MCF 10A (cell line): ENCODE measurements at regions of chr22 and their contacts with region 1.

Region 1: GRCh38 chr22:23893943-23894709 is at the start of gene MIF:
- DNase-seq: peak; percentile 94
- H3K4me3 Mint-ChIP-seq: peak within 1 kb of the TSS; percentile 89
- H3K27ac Mint-ChIP-seq: peak within 1 kb of the TSS; percentile 99
- H3K4me1 Mint-ChIP-seq: peaks cover 16% of the 10 kb centered on the region
- H3K27me3 Mint-ChIP-seq: no peaks in the 10 kb centered on the region
- CTCF ChIP-seq: peak; percentile 93
- total RNA-seq, gene MIF: 1,031 and 1,126 TPM in 2 replicates

Region 2: DNA sequence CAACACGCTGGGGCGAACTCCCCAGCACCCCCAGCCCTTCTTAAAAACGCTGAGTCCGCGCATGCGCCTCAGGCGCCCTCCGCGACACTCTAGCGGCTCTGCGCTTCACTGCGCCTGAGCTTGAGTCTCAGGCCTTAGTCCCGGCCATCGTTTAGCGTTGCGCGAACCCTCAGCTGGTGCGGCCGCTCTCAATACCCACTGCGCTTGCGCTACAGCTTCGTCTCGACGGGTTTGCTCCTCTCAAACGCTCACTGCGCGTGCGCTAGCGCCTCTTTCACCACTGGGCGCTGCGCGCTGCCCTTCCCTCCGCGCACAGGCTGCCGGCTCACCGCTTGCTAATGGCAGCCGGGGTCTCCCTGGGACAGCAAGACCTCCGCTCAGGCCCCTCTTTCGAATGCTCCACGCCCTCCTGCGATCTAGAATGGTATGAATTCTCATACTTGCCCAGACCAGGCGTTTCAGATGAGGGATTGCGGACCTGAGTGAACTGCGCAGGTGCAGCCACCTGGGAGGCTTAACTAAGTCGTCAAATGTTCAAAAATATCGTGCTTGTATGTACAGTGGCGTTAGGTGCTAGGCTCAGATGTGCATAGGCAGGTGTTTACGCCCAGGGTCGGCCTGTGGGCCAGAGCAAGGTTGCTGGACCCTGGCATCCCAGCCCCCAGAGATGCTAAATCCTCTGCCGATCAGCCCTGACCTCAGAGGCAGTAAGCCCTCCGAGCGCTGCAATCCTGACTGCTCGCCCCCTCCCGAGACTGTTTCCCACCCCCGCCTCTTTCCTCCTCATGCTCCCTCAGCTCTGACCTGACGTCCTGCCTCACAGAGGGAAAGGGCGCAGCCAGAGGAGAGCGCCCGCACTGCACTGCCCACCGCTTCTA is 36.3 kb before region 1 on chr22 and contains the start of gene SLC2A11:
- CTCF ChIA-PET with region 1: interaction called, 9 read pairs
- POLR2A ChIA-PET with region 1: interaction called, 30 read pairs
- intact Hi-C with region 1: no loop called
- DNase-seq: peak; percentile 97
- H3K4me3 Mint-ChIP-seq: peak within 1 kb of the TSS; percentile 77
- H3K27ac Mint-ChIP-seq: peak within 1 kb of the TSS; percentile 57
- H3K4me1 Mint-ChIP-seq: peaks cover 8% of the 10 kb centered on the region
- H3K27me3 Mint-ChIP-seq: no peaks in the 10 kb centered on the region
- CTCF ChIP-seq: peak; percentile 7
- total RNA-seq, gene SLC2A11: 9.6 and 11.3 TPM in 2 replicates

Region 3: GRCh38 chr22:23904573-23905260 is 10.6 kb after region 1 on chr22:
- CTCF ChIA-PET with region 1: interaction called, 16 read pairs
- POLR2A ChIA-PET with region 1: interaction called, 22 read pairs
- intact Hi-C with region 1: no loop called
- DNase-seq: no peak
- H3K4me3 Mint-ChIP-seq: no peak overlapping the region
- H3K27ac Mint-ChIP-seq: no peak overlapping the region
- H3K4me1 Mint-ChIP-seq: no peaks in the 10 kb centered on the region
- H3K27me3 Mint-ChIP-seq: no peaks in the 10 kb centered on the region
- CTCF ChIP-seq: no peak

Region 4: DNA sequence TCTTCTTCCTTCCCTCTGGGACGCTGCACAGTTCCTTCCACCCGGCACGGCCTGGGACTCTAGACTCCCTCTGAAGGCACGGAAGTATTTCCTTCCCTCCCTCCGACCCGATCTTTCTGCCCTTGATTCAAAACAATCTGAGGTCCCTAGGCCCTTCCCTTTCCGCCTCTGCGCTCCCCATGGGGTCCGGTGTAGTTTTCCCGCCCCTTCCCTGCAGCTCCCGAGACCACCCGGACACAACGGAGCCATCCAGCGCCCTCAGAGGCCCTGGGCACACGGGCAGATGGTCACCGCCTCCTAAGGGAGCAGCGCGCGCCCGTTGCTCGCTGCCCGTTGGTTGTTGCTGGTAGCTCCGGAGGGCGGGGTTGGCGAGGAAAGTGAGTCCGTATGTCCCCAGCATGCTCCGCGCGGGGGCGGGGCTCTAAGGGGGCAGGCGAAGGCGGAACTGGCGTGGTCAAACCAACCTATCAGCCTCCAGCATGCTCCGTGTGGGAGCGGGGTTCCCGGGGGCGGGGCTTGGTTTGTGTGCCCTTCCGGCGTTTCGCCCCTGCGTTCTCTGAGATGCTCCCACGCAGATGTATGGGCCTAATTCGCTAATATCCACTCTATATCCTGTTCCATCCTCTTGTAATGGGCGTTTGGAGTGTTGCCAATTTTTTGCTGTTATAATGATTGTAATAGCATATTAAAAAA is 19.7 kb after region 1 on chr22:
- CTCF ChIA-PET with region 1: interaction called, 6 read pairs
- POLR2A ChIA-PET with region 1: interaction called, 59 read pairs
- intact Hi-C with region 1: loop called (anchors 2 kb)
- DNase-seq: peak; percentile 99
- H3K4me3 Mint-ChIP-seq: peak overlapping the region; percentile 79
- H3K27ac Mint-ChIP-seq: peak overlapping the region; percentile 91
- H3K4me1 Mint-ChIP-seq: peaks cover 7% of the 10 kb centered on the region
- H3K27me3 Mint-ChIP-seq: no peaks in the 10 kb centered on the region
- CTCF ChIP-seq: no peak

Region 5: GRCh38 chr22:24088816-24089215 is 194.7 kb after region 1 on chr22:
- CTCF ChIA-PET with region 1: no interaction called
- POLR2A ChIA-PET with region 1: no interaction called
- intact Hi-C with region 1: no loop called
- DNase-seq: no peak
- H3K4me3 Mint-ChIP-seq: no peak overlapping the region
- H3K27ac Mint-ChIP-seq: no peak overlapping the region
- H3K4me1 Mint-ChIP-seq: no peaks in the 10 kb centered on the region
- H3K27me3 Mint-ChIP-seq: no peaks in the 10 kb centered on the region
- CTCF ChIP-seq: no peak